PC-3 (cell line): ENCODE measurements at regions of chrX and their contacts with region 1.

Region 1: DNA sequence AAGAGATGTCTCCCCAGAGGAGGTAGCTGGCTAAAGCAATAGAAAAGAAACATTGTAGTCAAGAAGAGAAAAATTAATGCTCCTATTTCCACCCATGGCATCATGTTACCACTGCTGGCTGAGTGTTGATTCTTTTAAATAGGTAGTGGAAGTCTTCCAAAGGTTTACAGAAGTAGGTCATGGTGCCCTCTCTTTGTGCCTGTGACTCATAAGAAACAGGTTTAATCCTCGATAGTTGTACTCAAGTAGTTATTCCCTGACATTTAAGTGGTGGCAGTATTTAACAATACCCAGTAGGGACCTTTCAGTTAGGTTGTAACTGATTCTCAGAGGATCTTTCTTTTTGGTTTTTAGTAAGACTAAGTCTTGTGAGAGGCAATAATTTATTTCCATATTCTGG is 247.8 kb downstream of the TEX13A start:
- DNase-seq: peak; percentile 85
- ATAC-seq: peak; percentile 98
- H3K4me3 ChIP-seq: no peak overlapping the region
- H3K27ac ChIP-seq: no peak overlapping the region
- H3K4me1 ChIP-seq: peaks cover 21% of the 10 kb centered on the region
- H3K27me3 ChIP-seq: no peaks in the 10 kb centered on the region
- CTCF ChIP-seq: no peak; the same call in 1 of the 2 replicates

Region 2: DNA sequence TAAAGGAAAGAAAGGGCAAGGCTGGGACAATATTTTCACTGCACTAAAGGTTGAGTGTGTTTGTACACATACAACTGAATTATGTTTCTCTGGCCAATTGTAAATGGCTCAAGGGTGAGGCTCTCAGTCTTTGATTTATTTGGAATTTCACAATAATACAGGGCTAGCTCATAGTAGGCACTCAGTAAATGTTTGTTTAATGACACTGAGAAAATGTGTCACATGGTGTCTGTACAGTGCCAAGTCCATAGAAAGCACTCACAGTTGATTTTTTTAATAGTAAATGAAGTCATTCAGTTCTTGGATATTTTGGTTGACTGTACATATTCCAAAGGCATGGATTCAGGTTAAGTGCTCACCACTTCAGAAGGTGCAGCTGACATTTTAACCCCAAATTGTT is 230.4 kb before region 1 on chrX:
- CTCF ChIA-PET with region 1: no interaction called
- POLR2A ChIA-PET with region 1: no interaction called
- intact Hi-C with region 1: loop called (anchors 10 kb)
- DNase-seq: peak; percentile 88
- ATAC-seq: peak; percentile 91
- H3K4me3 ChIP-seq: peak overlapping the region; percentile 14; the same call in 1 of the 2 replicates
- H3K27ac ChIP-seq: peak overlapping the region; percentile 79
- H3K4me1 ChIP-seq: peaks cover 37% of the 10 kb centered on the region
- H3K27me3 ChIP-seq: no peaks in the 10 kb centered on the region
- CTCF ChIP-seq: no peak